Right ventricle myocardium inferior (tissue), 1 donor: ENCODE measurements at regions of chr10 and their contacts with region 1.

Region 1: DNA sequence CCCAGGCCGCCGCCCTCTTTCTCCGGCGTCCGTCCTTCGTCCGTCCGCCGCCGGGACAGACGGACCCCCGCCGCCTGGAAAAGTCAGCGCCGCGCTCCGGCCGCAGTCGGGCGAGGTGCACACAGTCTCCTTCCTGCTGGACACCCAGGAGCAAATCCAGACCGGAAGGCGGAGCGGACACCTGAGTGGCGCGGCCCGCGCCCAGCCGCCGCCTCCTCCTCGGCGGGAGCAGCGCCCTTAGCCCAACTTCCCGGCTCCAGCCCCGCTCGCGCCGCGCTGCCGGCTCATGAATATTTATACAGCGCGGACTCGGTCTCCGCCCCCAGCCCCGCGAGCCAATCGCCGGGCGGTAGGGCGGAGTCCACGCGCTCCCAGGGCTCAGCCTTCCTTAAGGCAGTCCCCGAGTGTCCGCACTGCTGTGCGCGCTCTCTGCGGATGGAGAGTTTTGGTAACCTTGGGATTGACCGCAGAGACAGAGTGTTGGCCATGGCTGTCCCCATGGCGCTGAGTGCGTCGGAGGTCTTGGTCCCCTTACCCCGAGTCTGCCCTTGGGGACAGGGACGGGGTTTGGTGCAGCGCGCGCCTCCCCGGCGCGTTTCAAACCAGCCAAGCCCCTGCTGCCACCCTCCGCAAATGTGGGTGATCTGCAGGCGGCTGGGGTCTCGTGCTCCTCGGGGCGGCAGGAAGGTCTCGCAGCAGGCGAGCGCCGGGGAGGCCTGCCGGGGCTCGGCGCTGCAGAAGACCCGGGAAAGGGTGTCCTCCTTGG is at the start of gene FZD8:
- DNase-seq: peak; percentile 95
- ATAC-seq: peak; percentile 95
- total RNA-seq, gene FZD8: 9.0 TPM

Region 2: DNA sequence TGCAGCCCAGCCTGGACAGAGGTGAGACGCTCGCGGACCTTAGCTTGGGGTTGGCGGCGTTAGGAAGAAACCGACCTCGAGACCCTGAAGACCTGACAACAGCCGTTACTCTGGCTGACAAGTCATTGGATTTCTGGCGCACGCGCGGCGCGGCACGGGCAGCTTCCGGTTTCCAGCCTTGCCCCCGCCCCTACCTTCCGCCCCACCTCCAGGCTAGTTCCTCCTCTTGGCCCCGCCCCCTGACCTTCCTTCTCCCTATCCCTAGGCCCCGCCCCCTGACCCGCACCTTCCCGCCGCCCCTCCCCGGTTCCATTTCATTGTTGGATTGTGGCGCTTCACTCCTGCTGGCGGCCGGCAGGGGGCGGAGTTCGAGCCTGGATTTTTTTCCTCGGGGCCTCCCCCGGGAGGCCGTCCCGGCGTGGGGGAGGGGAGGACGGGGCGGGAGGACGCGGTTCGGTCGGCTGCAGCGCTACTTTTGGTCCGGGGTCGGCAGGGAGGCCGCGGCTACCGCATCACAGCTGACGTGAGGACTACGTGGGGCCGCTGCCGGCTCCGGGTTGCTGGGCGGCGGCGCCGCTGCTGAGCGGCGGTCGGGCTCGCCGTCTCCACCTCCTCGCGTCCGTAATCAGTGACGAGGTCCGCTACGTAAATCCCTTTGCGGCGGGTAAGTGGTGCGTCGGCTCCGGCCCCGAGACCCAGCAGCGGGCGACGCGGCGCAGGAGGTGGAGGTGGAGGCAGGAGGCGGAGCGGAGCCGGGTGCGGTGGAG is 515.5 kb before region 1 on chr10 and contains the start of gene CREM:
- intact Hi-C with region 1: loop called (anchors 5 kb)
- DNase-seq: peak; percentile 99
- ATAC-seq: peak; percentile 98
- total RNA-seq, gene CREM: 63.7 TPM

Region 3: DNA sequence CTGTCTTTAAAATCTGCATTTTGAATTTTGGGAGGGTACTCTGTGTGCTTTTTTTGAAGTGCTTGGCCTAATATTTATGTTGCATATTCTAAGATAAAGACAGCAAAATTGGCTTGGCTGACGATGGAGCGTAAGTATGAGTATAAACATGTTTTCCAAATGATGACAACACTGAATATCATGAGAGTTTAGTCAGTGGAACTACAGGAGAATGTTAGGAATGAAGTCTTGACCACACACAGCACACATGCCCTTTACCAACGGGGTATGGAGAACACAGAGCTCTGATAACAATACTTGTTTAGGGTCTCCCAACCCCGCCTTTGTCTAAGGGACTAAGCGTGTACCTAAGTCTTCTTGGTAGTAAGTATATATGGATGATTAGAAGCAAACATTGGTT is 253.8 kb after region 1 on chr10:
- intact Hi-C with region 1: loop called (anchors 5 kb)
- DNase-seq: no peak
- ATAC-seq: no peak

Region 4: GRCh38 chr10:35993591-35994515 is 351.6 kb after region 1 on chr10:
- intact Hi-C with region 1: loop called (anchors 5 kb)
- DNase-seq: no peak
- ATAC-seq: no peak

Region 5: DNA sequence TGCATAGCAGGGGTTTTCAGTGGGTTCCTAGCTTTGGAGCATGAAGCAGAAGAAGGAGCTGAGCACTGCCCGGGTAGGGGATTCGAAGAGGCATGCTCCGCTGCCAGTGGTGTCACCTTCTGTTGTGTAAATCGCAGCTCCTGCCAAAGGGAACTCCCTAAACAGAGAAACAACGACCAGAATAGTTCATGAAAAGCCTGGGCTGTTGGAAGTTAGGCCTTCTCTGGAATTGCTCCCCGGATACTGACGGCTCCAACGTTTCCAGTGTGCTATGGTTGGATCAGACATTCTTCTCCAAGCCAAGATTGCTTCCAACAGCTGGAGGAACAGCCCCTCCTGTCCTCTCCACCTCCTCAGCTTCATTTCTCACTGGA is 545.9 kb after region 1 on chr10:
- intact Hi-C with region 1: loop called (anchors 5 kb)
- DNase-seq: no peak
- ATAC-seq: peak; percentile 94

Region 6: DNA sequence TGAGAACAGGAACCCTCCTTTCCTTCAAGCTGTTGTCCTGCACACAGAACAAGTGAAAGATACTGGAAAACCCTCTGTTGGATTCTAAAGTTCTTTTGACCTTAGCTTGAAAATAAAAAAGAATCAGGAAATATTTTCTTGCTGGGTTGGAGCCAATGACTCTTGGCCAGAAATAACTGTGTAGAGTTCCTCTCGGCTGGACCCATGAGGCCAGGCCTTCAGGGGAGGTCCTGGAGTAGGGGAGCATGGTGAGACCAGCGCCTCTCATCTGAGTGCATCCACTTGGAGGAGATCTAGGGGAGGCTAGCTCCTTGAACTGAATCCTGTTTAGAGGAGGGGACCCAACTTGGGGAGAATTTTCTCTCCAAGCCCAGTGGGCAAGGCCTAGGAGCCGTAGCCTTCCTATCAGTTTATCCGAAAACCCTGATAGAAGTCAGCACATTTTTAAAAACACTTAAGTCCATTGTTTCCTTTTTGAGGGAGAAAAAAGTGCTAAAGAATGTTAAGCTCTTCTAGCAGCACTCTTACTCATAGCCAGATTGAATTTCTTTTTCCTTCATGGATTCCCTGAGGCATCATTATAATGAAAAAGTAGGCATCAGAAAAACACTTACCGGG is 847.5 kb after region 1 on chr10:
- intact Hi-C with region 1: loop called (anchors 5 kb)
- DNase-seq: peak; percentile 42
- ATAC-seq: peak; percentile 84